ENCODE measurements at regions of chr5 and their contacts with region 1.

Region 1: GRCh38 chr5:56737951-56738606 is 77.3 kb upstream of the MAP3K1 start:
- DNase-seq: no peak
- ATAC-seq: no peak
- H3K4me3 ChIP-seq: no peak overlapping the region
- H3K4me3 Mint-ChIP-seq: no peak overlapping the region
- H3K27ac ChIP-seq: peak overlapping the region; percentile 59
- H3K27ac Mint-ChIP-seq: peak overlapping the region; percentile 67 to 74
- H3K4me1 ChIP-seq: peaks cover 26 to 48% of the 10 kb centered on the region in 2 experiments
- H3K4me1 Mint-ChIP-seq: peaks cover 47 to 54% (median 50%) of the 10 kb centered on the region in 3 donors
- H3K27me3 ChIP-seq: no peaks in the 10 kb centered on the region
- H3K27me3 Mint-ChIP-seq: no peaks in the 10 kb centered on the region

Region 2: GRCh38 chr5:56451742-56452141 is 286.3 kb before region 1 on chr5:
- CTCF ChIA-PET with region 1: interaction called in 1 of 2 experiments, 10 read pairs
- POLR2A ChIA-PET with region 1: no interaction called
- DNase-seq: no peak
- ATAC-seq: no peak
- H3K4me3 ChIP-seq: no peak overlapping the region
- H3K4me3 Mint-ChIP-seq: no peak overlapping the region
- H3K27ac ChIP-seq: no peak overlapping the region
- H3K27ac Mint-ChIP-seq: no peak overlapping the region
- H3K4me1 ChIP-seq: no peaks in the 10 kb centered on the region
- H3K4me1 Mint-ChIP-seq: peaks cover 0 to 7% (median 6%) of the 10 kb centered on the region in 3 donors
- H3K27me3 ChIP-seq: peaks cover 0 to 3% of the 10 kb centered on the region in 2 experiments
- H3K27me3 Mint-ChIP-seq: no peaks in the 10 kb centered on the region

Region 3: GRCh38 chr5:56757071-56757470 is 19.0 kb after region 1 on chr5:
- CTCF ChIA-PET with region 1: no interaction called
- POLR2A ChIA-PET with region 1: no interaction called
- DNase-seq: no peak
- ATAC-seq: no peak
- H3K4me3 ChIP-seq: no peak overlapping the region
- H3K4me3 Mint-ChIP-seq: no peak overlapping the region
- H3K27ac ChIP-seq: no peak overlapping the region
- H3K27ac Mint-ChIP-seq: no peak overlapping the region
- H3K4me1 ChIP-seq: no peaks in the 10 kb centered on the region
- H3K4me1 Mint-ChIP-seq: peaks cover 0 to 15% (median 7%) of the 10 kb centered on the region in 3 donors
- H3K27me3 ChIP-seq: no peaks in the 10 kb centered on the region
- H3K27me3 Mint-ChIP-seq: no peaks in the 10 kb centered on the region

Measured in T-cell (primary cell).